PC-9 (cell line): ENCODE measurements at regions of chr5 and their contacts with region 1.

Region 1: GRCh38 chr5:138789771-138790242 is 36.6 kb downstream of the CTNNA1 start:
- DNase-seq: no peak
- H3K4me3 ChIP-seq: no peak overlapping the region
- H3K27ac ChIP-seq: no peak overlapping the region
- H3K4me1 ChIP-seq: no peaks in the 10 kb centered on the region
- H3K27me3 ChIP-seq: no peaks in the 10 kb centered on the region
- CTCF ChIP-seq: peak; percentile 73

Region 2: DNA sequence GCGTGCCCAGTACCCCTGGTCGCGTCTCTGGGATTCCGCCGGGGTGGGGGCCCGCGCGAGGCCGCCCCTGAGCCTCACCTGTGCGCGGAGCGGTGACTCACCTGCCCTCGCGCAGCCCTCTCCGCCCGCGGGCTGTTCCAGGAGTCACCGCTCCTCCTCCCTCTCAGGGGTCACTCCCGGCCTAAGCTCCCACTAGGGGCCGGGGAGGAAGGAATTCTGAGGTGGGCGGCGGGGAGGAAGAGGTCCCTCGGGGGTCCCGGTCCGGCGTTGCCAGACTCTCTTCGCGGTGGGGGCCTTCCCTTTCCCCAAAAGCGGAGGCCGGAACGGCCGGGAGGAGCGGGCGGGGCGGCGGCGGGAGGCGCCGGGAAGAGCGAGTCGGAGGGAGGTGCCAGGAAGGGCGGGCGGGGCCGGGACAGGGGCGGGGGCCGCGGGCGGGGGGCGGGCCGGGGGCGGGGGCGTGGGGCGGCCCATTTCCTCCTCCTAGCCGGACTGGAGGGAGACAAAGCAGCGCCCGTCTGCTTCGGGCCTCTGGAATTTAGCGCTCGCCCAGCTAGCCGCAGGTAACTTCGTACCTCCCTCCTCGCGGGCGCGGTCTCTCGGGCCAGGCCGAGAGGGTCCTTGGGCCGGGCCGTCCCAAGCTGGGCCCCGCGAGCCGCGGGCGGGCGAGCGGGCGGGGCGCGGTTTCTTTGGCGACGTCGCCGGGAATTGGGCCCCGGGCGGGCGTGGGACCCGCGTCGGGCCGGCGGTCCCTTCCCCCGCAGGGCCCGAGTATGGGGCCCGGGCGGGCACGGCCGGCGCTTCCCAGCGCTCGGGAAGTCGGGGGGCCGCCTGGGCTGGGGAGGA is 36.6 kb before region 1 on chr5 and contains the start of gene CTNNA1:
- CTCF ChIA-PET with region 1: no interaction called
- POLR2A ChIA-PET with region 1: interaction called, 11 read pairs
- intact Hi-C with region 1: no loop called
- DNase-seq: peak; percentile 70 to 89
- H3K4me3 ChIP-seq: peak within 1 kb of the TSS; percentile 60
- H3K27ac ChIP-seq: peak within 1 kb of the TSS; percentile 74
- H3K4me1 ChIP-seq: peaks cover 30% of the 10 kb centered on the region
- H3K27me3 ChIP-seq: no peaks in the 10 kb centered on the region
- CTCF ChIP-seq: no peak
- total RNA-seq, gene CTNNA1: 91.7 and 94.0 TPM in 2 replicates

Region 3: DNA sequence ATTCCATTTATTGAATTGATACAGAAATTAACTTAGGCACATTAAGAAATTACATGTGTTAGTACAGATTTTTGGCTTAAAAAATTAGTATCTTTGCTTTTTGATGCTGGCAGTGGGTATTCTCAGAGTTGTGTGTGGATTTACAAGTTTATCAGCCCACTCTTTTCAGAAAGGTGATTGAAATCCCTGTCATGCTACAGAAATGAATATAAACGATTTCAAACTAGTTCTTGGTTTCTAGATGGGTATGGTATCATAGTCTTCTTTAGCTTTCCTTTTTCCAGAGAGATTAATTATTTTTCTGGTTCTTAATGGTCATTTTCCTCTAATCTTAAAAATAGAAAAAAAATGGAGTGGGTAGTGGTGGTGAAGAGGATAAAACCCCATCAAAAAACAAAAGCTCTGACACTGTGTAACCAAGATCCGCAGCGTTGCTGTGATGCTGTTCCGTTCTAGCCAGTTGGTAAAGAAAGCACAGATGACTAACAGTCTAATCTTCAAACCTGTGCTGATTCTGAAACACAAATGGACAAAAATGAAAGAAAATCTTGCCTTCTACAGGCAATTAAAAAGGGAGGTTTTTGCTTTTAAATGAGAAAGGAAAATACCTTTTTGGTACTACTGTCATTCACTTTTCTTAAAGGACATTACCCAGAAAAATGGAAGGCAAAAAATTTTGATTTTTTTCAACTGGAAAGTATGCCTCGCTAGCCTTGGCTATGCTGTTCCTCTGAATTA is 80.1 kb after region 1 on chr5:
- CTCF ChIA-PET with region 1: interaction called, 23 read pairs
- POLR2A ChIA-PET with region 1: interaction called, 5 read pairs
- intact Hi-C with region 1: no loop called
- DNase-seq: peak in 1 of 2 experiments; percentile 24
- H3K4me3 ChIP-seq: no peak overlapping the region
- H3K27ac ChIP-seq: 0 out of 2 replicates have a peak overlapping the region, but pooled peaks have one; percentile 29
- H3K4me1 ChIP-seq: peaks cover 17% of the 10 kb centered on the region
- H3K27me3 ChIP-seq: no peaks in the 10 kb centered on the region
- CTCF ChIP-seq: no peak